Activated CD8-positive, alpha-beta memory T cell treated with anti-CD3 and anti-CD28 coated beads, Interleukin-2, amount 10 ng/mL, durations not matched to agents 7 days and 5 days (primary cell): ENCODE measurements at regions of chr11 and their contacts with region 1.

Region 1: DNA sequence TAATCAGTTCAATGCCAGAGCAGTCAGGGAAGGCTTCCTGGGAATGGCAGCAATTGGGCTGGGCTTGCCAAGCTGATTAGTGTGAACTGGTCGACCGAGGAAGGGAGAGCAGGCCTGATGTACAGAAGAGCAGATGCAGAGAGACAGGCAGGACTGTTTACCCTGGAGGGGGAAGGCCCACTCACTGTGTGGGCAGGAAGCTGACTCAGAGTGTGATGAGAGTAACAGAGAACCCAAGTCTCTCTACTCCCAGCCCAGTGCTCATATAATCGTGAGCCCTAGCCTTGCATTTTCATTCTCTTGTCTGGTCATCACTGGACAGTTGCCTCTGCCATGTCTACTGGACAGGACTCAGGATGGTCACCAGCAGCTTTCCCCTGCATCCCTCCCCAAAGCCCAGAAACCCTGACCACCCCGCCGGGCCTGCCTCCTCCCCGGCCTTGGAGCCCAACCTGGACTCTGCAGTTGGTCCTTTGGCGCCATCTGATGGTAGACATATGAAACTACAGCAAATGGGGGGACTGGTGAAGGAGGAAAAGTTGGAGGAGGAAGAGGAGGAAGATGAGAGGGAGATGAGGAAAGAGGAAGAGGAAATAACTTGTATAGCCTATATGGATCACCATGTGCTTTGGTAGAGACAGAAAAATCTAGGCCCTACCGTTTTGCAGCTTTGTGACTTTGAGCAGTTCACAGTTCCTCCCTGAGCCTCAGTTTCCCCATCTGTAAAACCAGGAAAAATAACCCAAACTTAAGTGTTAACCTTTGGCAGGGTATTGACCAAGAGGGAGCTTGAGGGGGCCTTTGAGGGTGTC is 43.4 kb upstream of the PRDM11 start:
- DNase-seq: peak; percentile 86
- ATAC-seq: peak; percentile 99
- H3K4me3 Mint-ChIP-seq: peak overlapping the region; percentile 66
- H3K27ac Mint-ChIP-seq: peak overlapping the region; percentile 85
- H3K4me1 Mint-ChIP-seq: peaks cover 13% of the 10 kb centered on the region
- H3K27me3 Mint-ChIP-seq: peaks cover 23% of the 10 kb centered on the region

Region 2: GRCh38 chr11:44747316-44747715 is 355.7 kb before region 1 on chr11:
- CTCF ChIA-PET with region 1: no interaction called
- DNase-seq: no peak
- ATAC-seq: no peak
- H3K4me3 Mint-ChIP-seq: no peak overlapping the region
- H3K27ac Mint-ChIP-seq: no peak overlapping the region
- H3K4me1 Mint-ChIP-seq: peaks cover 3% of the 10 kb centered on the region
- H3K27me3 Mint-ChIP-seq: no peaks in the 10 kb centered on the region

Region 3: GRCh38 chr11:44936525-44936924 is 166.5 kb before region 1 on chr11:
- CTCF ChIA-PET with region 1: interaction called, 622 read pairs
- DNase-seq: peak; percentile 86
- ATAC-seq: peak; percentile 87
- H3K4me3 Mint-ChIP-seq: no peak overlapping the region
- H3K27ac Mint-ChIP-seq: no peak overlapping the region
- H3K4me1 Mint-ChIP-seq: no peaks in the 10 kb centered on the region
- H3K27me3 Mint-ChIP-seq: no peaks in the 10 kb centered on the region

Region 4: GRCh38 chr11:45062971-45063611 is 39.9 kb before region 1 on chr11:
- CTCF ChIA-PET with region 1: interaction called, 10 read pairs
- DNase-seq: no peak
- ATAC-seq: no peak
- H3K4me3 Mint-ChIP-seq: no peak overlapping the region
- H3K27ac Mint-ChIP-seq: no peak overlapping the region
- H3K4me1 Mint-ChIP-seq: no peaks in the 10 kb centered on the region
- H3K27me3 Mint-ChIP-seq: peaks cover 3% of the 10 kb centered on the region

Region 5: GRCh38 chr11:45079943-45080719 is 22.9 kb before region 1 on chr11:
- CTCF ChIA-PET with region 1: interaction called, 47 read pairs
- DNase-seq: peak; percentile 83
- ATAC-seq: peak; percentile 94
- H3K4me3 Mint-ChIP-seq: no peak overlapping the region
- H3K27ac Mint-ChIP-seq: peak overlapping the region; percentile 88
- H3K4me1 Mint-ChIP-seq: peaks cover 51% of the 10 kb centered on the region
- H3K27me3 Mint-ChIP-seq: no peaks in the 10 kb centered on the region

Region 6: DNA sequence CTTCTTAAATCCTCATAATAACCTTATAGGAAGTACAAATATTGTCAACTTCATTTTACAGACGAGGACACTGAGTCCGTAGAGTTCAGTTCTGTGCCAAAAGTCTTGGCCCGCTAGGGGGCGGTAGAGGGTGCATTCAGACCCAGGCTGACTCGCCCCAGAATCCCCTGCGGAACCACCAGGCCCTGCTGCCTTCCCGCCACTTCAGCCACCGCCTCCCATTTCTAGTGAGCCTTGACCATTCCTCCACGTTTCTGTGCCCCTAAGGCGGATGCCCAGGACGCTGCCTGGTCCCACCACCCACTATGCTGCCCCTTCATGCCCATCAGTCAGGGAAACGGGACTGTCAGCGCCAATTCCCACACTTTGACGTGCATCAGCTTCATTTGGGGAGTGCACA is 164.0 kb after region 1 on chr11:
- CTCF ChIA-PET with region 1: no interaction called
- DNase-seq: no peak
- ATAC-seq: no peak
- H3K4me3 Mint-ChIP-seq: no peak overlapping the region
- H3K27ac Mint-ChIP-seq: no peak overlapping the region
- H3K4me1 Mint-ChIP-seq: no peaks in the 10 kb centered on the region
- H3K27me3 Mint-ChIP-seq: peaks cover 47% of the 10 kb centered on the region

Region 7: GRCh38 chr11:45332276-45332934 is 229.4 kb after region 1 on chr11:
- CTCF ChIA-PET with region 1: interaction called, 11 read pairs
- DNase-seq: no peak
- ATAC-seq: peak; percentile 20
- H3K4me3 Mint-ChIP-seq: no peak overlapping the region
- H3K27ac Mint-ChIP-seq: no peak overlapping the region
- H3K4me1 Mint-ChIP-seq: no peaks in the 10 kb centered on the region
- H3K27me3 Mint-ChIP-seq: peaks cover 19% of the 10 kb centered on the region